Spleen (tissue), 13 donors: ENCODE measurements at regions of chr11 and their contacts with region 1.

Region 1: DNA sequence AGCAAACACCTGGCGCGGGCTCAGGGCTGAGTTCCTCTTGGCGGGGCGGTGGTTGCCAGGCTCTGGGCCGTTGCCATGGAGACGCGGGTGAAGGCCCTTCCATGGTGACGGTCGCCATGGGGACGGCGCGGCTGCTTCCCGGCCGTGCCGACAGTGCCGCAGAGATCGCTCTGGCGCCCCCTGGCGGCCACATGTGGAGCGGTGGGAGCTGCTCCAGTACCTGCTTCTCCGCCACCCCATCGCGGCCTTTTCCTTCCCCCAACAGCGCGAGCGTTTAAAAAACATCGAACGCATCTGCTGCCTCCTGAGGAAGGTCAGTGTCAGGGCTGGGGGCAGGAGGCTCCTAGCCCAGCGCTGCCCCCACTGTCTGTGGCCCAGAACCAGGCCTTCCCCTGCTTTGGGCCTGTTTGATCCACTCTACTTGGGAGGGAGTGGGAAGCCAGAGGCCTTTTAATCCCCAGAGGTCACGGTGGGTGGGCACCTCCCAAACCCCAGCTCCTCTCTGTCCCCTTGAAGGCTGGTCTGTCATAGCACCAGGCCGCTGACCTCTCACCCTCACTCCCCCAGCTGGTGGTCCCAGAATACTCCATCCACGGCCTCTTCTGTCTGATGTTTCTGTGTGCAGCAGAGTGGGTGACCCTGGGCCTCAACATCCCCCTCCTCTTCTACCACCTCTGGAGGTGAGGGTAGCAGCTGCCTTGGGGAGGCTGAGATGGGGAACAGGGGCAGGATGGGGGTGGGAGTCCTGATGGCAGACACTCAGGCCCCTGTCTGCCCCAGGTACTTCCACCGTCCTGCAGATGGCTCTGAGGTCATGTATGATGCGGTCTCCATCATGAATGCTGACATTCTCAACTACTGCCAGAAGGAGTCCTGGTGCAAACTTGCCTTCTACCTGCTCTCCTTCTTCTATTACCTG is 4.8 kb downstream of the CNIH2 start:
- DNase-seq: peak; percentile 100
- H3K4me3 ChIP-seq: peak overlapping the region in 1 of 8 donors; percentile 39
- H3K27ac ChIP-seq: peak overlapping the region in 4 of 8 donors; percentile 46 to 61 (median 50)
- H3K4me1 ChIP-seq: peaks cover 8 to 69% (median 31%) of the 10 kb centered on the region in 6 donors
- H3K27me3 ChIP-seq: peaks cover 0 to 17% (median 0%) of the 10 kb centered on the region in 7 donors
- CTCF ChIP-seq: peak; percentile 97 to 99 (median 99)
- POLR2A ChIP-seq: no peak

Region 2: DNA sequence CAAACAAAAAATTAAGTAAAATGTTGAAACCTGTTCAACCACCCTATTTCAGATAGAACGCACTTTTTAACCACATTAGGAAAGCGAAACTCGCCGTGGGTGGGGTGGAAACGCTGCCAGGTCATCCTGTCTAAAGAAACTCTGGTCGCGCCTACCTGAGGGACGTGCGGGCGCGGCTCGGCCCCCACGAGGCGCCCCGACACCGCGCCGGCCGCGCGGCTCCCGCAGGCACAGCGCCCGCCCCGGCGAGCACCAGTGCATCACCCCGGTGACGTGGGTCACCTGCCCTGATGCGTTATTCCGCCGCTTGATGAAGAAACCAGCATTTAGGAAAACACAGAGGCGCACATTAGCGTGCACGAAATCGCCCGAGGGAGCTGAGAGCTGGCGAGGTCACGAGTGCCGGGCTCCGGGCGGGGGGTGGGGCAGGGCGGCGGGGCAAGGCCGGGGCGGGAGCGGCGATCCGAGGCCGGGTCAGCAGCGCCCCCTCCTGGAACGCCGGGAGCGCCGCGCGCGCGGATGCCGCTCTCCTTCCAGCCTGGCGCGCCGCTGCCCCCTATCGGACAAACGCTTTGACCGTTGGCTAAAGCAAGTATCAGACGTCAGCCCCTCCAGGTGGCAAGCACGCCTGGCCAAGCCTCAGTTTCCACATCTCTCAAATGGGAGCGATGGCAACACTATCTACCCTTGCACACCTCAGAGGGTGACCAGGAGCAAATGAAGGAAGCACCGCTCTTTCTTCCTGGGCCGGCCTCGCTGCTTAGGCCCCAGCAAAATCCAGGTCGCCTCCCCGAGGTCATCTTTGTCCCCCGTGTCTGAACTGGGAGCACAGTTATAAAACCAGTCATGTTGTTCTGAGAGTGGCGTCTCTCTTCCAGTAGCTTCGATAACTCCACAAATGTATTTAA is 464.6 kb before region 1 on chr11:
- intact Hi-C with region 1: no loop called
- DNase-seq: peak; percentile 99
- H3K4me3 ChIP-seq: peak overlapping the region; percentile 43 to 91 (median 66)
- H3K27ac ChIP-seq: peak overlapping the region; percentile 69 to 91 (median 85)
- H3K4me1 ChIP-seq: peaks cover 4 to 31% (median 21%) of the 10 kb centered on the region in 6 donors
- H3K27me3 ChIP-seq: no peaks in the 10 kb centered on the region
- CTCF ChIP-seq: peak; percentile 89 to 100 (median 100)
- POLR2A ChIP-seq: no peak

Region 3: GRCh38 chr11:66222358-66223149 is 60.2 kb before region 1 on chr11:
- intact Hi-C with region 1: loop called (anchors 5 kb)
- DNase-seq: peak; percentile 97
- H3K4me3 ChIP-seq: no peak overlapping the region
- H3K27ac ChIP-seq: peak overlapping the region; percentile 10 to 72 (median 62)
- H3K4me1 ChIP-seq: peaks cover 0 to 17% (median 12%) of the 10 kb centered on the region in 6 donors
- H3K27me3 ChIP-seq: no peaks in the 10 kb centered on the region
- CTCF ChIP-seq: peak; percentile 98 to 100 (median 99)
- POLR2A ChIP-seq: no peak